BJ (cell line): ENCODE measurements at regions of chr4 and their contacts with region 1.

Region 1: GRCh38 chr4:7067452-7068278 is at the start of gene GRPEL1:
- DNase-seq: peak; percentile 97
- H3K4me3 ChIP-seq: peak within 1 kb of the TSS; percentile 70
- H3K27me3 ChIP-seq: no peaks in the 10 kb centered on the region
- CTCF ChIP-seq: no peak
- polyA plus RNA-seq, gene GRPEL1: 21.1 and 35.2 TPM in 2 replicates

Region 2: GRCh38 chr4:6873792-6874461 is 193.7 kb before region 1 on chr4:
- CTCF ChIA-PET with region 1: interaction called, 13 read pairs
- POLR2A ChIA-PET with region 1: no interaction called
- DNase-seq: no peak
- H3K4me3 ChIP-seq: no peak overlapping the region
- H3K27me3 ChIP-seq: no peaks in the 10 kb centered on the region
- CTCF ChIP-seq: peak; percentile 84

Region 3: GRCh38 chr4:6986781-6987587 is 80.7 kb before region 1 on chr4:
- CTCF ChIA-PET with region 1: interaction called, 15 read pairs
- POLR2A ChIA-PET with region 1: no interaction called
- DNase-seq: no peak
- H3K4me3 ChIP-seq: peak overlapping the region; percentile 91
- H3K27me3 ChIP-seq: no peaks in the 10 kb centered on the region
- CTCF ChIP-seq: peak; percentile 15; the same call in 1 of the 2 replicates

Region 4: DNA sequence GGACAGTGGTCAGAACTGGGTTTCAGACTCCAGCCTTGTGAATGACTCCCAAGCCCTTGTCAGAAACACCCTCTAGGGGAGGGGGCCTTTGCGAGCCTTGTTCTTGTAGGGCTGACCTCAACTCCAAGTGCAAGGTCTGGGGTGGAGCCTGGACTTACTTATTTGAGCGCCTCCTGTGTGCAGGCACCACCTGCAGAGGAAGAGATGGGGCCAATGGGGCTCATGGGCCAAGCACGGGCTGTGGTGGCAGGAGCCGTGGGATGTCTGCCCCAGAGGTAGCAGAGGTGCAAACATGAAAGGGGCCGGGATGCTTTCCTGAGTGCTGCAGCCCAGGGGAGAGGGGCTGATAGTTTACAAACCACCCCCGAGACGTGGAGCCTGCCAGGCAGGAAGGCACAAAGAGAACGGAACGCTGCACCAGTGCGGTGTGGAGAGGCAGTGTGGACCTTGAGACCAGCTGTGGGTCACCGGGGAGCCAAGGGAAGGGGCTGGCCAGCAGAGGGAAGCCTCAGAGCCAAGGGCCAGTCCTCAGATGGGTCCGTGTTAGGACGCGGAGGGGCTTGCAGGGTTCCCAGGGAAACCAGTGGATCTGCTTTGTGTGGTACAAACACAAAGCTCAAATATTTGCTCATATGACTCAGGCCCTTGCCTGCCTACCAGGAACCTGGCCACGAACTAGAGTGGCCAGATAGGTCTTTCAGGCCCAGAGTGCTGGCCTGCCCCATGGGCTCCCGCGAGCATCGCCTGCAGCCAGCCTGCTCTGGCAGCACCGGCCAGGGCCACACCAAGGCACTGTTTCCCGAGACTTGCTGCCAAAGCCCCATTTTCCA is 33.2 kb before region 1 on chr4:
- CTCF ChIA-PET with region 1: no interaction called
- POLR2A ChIA-PET with region 1: no interaction called
- DNase-seq: no peak
- H3K4me3 ChIP-seq: no peak overlapping the region
- H3K27me3 ChIP-seq: no peaks in the 10 kb centered on the region
- CTCF ChIP-seq: no peak

Region 5: DNA sequence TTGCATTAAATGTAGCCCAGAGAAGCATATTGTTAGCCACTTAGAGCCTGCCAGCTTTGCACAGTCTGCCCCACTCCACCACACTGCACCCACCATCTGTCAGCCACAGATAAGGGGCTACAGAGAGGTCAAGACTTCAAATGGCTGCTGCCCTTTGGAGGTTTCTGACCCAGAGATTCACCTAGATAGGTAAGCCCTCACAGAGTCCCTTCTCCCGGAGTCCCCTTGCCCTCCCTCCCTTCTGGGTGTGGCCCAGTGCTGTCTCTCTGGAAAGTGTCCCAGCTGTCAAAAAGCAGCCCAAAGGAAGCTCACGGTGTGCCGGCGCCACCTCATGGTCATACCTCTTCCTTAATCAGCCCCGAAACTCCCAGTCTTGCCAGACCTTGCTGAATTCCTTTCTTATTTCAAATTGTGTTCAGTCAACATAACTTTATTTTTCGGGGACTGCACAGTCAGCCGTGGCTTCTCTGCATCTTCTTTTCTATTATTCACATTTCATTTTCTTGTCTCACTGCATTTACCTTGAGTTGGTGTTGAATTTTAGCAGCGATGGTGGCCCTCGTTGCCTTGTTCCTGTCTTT is 14.3 kb after region 1 on chr4:
- CTCF ChIA-PET with region 1: interaction called, 34 read pairs
- POLR2A ChIA-PET with region 1: no interaction called
- DNase-seq: no peak
- H3K4me3 ChIP-seq: no peak overlapping the region
- H3K27me3 ChIP-seq: peaks cover 11% of the 10 kb centered on the region
- CTCF ChIP-seq: peak; percentile 48

Region 6: DNA sequence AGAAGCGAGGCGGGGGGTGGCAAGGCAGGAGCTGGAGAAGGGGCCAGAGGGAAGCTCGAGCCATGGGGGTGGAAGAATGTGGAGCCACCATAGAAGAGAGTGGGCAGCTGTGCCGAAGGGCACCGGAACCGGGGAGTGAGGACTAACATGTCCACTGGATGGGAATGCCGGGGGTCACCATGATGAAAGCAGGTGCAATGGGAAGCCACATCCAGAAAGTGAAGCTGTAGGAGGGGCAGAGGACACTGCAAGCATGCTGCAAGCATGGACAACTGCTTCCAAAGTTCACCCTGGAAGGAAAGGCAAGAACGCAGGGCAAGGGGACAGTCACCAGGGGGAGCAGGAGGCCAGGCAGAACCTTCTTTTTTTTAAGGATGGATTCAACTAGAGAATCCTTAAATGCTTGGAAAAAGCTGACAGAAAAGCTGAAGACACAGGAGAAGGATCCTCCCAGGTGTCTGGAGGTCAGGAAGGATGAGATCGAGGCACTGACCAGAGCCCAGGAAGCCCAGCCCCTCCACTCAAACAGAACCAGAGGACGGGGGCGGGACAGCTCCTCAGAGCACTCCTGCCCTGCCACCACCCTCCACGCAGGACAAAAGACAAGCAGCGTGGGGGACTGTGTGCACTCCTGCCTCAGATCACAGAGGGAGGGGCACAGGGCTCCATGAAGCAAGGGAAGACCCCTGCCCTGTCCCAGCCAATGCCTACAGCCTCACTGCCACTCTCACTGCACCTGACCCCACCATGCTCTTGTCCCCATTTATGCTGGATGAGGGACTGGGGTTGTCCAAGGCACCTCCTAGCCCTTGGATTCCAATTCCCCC is 702.8 kb after region 1 on chr4:
- CTCF ChIA-PET with region 1: no interaction called
- POLR2A ChIA-PET with region 1: interaction called, 10 read pairs
- DNase-seq: no peak
- H3K4me3 ChIP-seq: no peak overlapping the region
- H3K27me3 ChIP-seq: no peaks in the 10 kb centered on the region
- CTCF ChIP-seq: peak; percentile 68